H1 (cell line): ENCODE measurements at regions of chr16 and their contacts with region 1.

Region 1: DNA sequence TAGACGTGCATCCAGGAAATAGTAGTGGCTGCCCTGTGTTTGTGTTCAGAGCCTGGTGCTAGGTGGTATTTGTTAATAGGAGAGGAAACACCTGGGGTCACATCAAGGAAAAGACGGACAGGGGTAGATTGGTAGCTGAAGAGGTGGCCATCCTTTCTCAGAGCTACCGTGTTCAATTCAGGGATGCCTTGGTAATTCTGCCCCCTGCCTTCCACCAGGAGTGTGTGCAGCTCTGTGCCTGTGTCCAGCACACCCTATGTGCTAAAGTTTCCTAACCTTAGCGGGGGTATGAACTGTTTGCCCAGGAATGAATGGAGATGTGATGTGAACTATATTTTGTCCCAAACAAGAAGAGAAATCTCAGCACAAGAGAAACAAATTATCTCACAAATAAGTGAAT is 174.1 kb upstream of the MPHOSPH6 start:
- DNase-seq: no peak
- H3K4me3 ChIP-seq: no peak overlapping the region
- H3K27ac ChIP-seq: no peak overlapping the region
- H3K4me1 ChIP-seq: no peaks in the 10 kb centered on the region; a peak in 1 of 7 replicates
- H3K27me3 ChIP-seq: no peaks in the 10 kb centered on the region
- CTCF ChIP-seq: peak; percentile 66 to 82 (median 80)
- EP300 ChIP-seq: no peak
- POLR2A ChIP-seq: no peak
- RAD21 ChIP-seq: peak; percentile 74 to 76

Region 2: GRCh38 chr16:82271636-82272035 is 72.5 kb before region 1 on chr16:
- CTCF ChIA-PET with region 1: interaction called, 11 read pairs
- POLR2A ChIA-PET with region 1: no interaction called
- DNase-seq: no peak
- H3K4me3 ChIP-seq: no peak overlapping the region
- H3K27ac ChIP-seq: no peak overlapping the region
- H3K4me1 ChIP-seq: no peaks in the 10 kb centered on the region
- H3K27me3 ChIP-seq: no peaks in the 10 kb centered on the region
- CTCF ChIP-seq: no peak
- EP300 ChIP-seq: no peak
- POLR2A ChIP-seq: no peak
- RAD21 ChIP-seq: no peak

Region 3: DNA sequence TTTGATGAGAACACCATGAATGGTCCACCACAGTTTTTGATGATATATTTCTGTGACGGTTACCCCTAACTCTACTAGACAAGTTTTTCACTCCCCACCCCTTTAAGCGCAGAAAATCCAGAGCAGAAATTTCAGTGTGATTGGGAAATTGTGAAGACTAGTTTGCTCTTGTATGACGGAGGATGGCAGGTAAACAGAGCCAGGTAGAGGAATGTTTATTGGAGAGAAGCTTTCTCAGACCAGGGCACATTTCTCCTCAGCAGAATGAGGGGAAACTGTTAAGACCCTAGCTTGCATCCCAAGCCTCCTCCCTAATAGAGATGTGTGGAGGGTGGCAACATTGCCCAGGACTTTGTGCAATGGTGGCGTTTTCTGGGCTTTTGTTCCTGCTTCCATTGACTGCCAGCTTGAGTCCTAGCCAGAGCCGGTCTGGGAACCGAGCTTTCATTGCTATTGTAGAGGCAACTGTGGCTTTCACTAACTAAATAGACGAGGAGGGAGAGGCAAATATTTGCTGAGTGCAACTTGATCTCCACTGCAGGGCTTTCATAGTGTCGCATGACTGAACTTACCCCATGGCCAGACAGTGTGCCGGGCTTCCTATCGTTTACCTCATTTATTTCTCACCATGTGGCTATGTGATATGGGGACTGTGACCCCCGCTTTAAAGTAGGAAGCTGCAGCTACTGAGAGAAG is 14.5 kb before region 1 on chr16:
- CTCF ChIA-PET with region 1: interaction called, 25 read pairs
- POLR2A ChIA-PET with region 1: no interaction called
- DNase-seq: no peak
- H3K4me3 ChIP-seq: no peak overlapping the region
- H3K27ac ChIP-seq: no peak overlapping the region
- H3K4me1 ChIP-seq: no peaks in the 10 kb centered on the region
- H3K27me3 ChIP-seq: no peaks in the 10 kb centered on the region
- CTCF ChIP-seq: no peak
- EP300 ChIP-seq: no peak
- POLR2A ChIP-seq: no peak
- RAD21 ChIP-seq: no peak

Region 4: GRCh38 chr16:82358568-82359221 is 14.5 kb after region 1 on chr16:
- CTCF ChIA-PET with region 1: interaction called, 32 read pairs
- POLR2A ChIA-PET with region 1: no interaction called
- DNase-seq: no peak
- H3K4me3 ChIP-seq: no peak overlapping the region
- H3K27ac ChIP-seq: no peak overlapping the region
- H3K4me1 ChIP-seq: no peaks in the 10 kb centered on the region; a peak in 1 of 7 replicates
- H3K27me3 ChIP-seq: no peaks in the 10 kb centered on the region
- CTCF ChIP-seq: no peak
- EP300 ChIP-seq: no peak
- POLR2A ChIP-seq: no peak
- RAD21 ChIP-seq: no peak

Region 5: DNA sequence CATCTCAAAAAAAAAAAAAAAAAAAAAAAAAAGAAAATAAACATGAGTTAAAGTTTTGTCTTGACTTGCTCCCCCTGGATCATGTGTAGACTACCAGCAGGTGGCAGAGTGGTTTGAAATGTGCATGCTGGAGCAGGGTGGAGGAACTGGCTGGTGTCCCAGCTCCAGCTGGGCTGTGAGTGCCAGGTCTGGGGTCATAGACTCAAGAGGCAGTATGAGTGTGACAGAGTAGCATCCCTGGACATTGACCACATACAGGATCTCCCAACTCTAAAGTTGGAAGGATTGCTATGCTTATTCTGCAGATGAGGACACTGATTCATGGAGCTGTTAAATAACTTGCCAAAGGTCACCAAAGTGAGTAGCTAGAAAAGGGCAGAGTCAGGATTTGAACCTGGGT is 23.9 kb after region 1 on chr16:
- CTCF ChIA-PET with region 1: interaction called, 14 read pairs
- POLR2A ChIA-PET with region 1: no interaction called
- DNase-seq: no peak
- H3K4me3 ChIP-seq: no peak overlapping the region
- H3K27ac ChIP-seq: no peak overlapping the region
- H3K4me1 ChIP-seq: no peaks in the 10 kb centered on the region
- H3K27me3 ChIP-seq: no peaks in the 10 kb centered on the region
- CTCF ChIP-seq: peak; percentile 29 to 45 (median 42)
- EP300 ChIP-seq: no peak
- POLR2A ChIP-seq: no peak
- RAD21 ChIP-seq: peak; percentile 46 to 54; a peak in 3 of 4 replicates